PC-3 (cell line): ENCODE measurements at regions of chr14 and their contacts with region 1.

Region 1: GRCh38 chr14:34982417-34983147 is at the start of gene SRP54:
- DNase-seq: peak; percentile 97
- ATAC-seq: peak; percentile 75
- H3K4me3 ChIP-seq: peak within 1 kb of the TSS; percentile 78
- H3K27ac ChIP-seq: peak within 1 kb of the TSS; percentile 93
- H3K4me1 ChIP-seq: peaks cover 19% of the 10 kb centered on the region
- H3K27me3 ChIP-seq: no peaks in the 10 kb centered on the region
- CTCF ChIP-seq: 0 out of 2 replicates have a peak, but pooled peaks have one; percentile 6
- total RNA-seq, gene SRP54: 49.3 and 75.5 TPM in 2 replicates

Region 2: GRCh38 chr14:34678306-34678705 is 304.3 kb before region 1 on chr14:
- CTCF ChIA-PET with region 1: no interaction called
- POLR2A ChIA-PET with region 1: no interaction called
- intact Hi-C with region 1: loop called (anchors 5 kb)
- DNase-seq: no peak
- ATAC-seq: peak; percentile 16
- H3K4me3 ChIP-seq: no peak overlapping the region
- H3K27ac ChIP-seq: peak overlapping the region; percentile 58
- H3K4me1 ChIP-seq: peaks cover 21% of the 10 kb centered on the region
- H3K27me3 ChIP-seq: no peaks in the 10 kb centered on the region
- CTCF ChIP-seq: no peak

Region 3: GRCh38 chr14:34833549-34834523 is 148.7 kb before region 1 on chr14:
- CTCF ChIA-PET with region 1: no interaction called
- POLR2A ChIA-PET with region 1: interaction called, 11 read pairs
- intact Hi-C with region 1: no loop called
- DNase-seq: no peak
- ATAC-seq: no peak
- H3K4me3 ChIP-seq: no peak overlapping the region
- H3K27ac ChIP-seq: no peak overlapping the region
- H3K4me1 ChIP-seq: peaks cover 13% of the 10 kb centered on the region
- H3K27me3 ChIP-seq: no peaks in the 10 kb centered on the region
- CTCF ChIP-seq: no peak

Region 4: DNA sequence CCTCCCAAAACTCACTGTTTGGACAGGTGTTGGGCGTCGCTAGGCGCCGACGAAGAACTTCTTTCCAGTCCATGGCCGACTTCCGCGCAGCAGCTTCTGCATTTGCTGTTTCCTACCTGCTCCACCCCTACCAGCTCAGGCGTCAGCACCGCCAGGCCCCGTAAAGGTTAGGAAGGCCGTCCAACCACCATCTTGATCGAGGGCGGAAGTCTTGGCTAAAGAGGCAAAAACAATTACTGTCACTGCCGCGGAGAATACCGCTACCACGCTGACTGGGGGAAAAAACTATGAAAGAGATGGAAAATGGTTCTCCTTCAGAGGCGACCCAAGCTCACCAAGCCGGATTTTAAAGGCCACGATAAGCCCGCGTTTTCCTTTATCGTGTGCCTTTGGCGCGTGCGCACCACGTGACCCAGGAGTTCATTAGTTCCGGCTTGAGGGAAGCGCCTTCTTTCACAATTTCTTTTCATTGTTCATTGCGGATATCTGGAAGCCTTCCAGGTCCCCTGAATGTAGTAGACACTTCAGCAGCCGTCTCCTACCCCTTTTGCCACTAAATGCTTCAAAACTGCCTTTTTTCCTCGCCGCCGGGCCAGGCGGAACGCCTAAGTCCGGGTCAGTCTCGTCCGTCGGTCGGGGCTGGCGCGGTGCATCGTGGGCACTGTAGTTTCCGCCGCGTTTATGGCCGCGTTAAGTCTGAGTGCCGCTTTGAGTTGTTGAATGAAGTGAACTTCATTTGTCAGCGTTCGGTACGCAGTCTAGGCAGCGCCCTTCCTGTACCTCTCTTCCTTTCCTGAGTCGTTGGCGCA is 139.5 kb after region 1 on chr14 and contains the starts of genes PPP2R3C and PRORP:
- CTCF ChIA-PET with region 1: interaction called, 3 read pairs
- POLR2A ChIA-PET with region 1: interaction called, 5 read pairs
- intact Hi-C with region 1: loop called (anchors 2 kb)
- DNase-seq: peak; percentile 98
- ATAC-seq: peak; percentile 85
- H3K4me3 ChIP-seq: peak within 1 kb of the TSS; percentile 83
- H3K27ac ChIP-seq: peak within 1 kb of the TSS; percentile 92
- H3K4me1 ChIP-seq: peaks cover 13% of the 10 kb centered on the region
- H3K27me3 ChIP-seq: no peaks in the 10 kb centered on the region
- CTCF ChIP-seq: no peak
- total RNA-seq, gene PPP2R3C: 15.2 and 20.3 TPM in 2 replicates
- total RNA-seq, gene PRORP: 25.1 and 25.3 TPM in 2 replicates

Region 5: GRCh38 chr14:35159742-35160409 is 177.3 kb after region 1 on chr14:
- CTCF ChIA-PET with region 1: no interaction called
- POLR2A ChIA-PET with region 1: no interaction called
- intact Hi-C with region 1: no loop called
- DNase-seq: peak; percentile 97
- ATAC-seq: peak; percentile 99
- H3K4me3 ChIP-seq: peak overlapping the region; percentile 49
- H3K27ac ChIP-seq: peak overlapping the region; percentile 95
- H3K4me1 ChIP-seq: peaks cover 42% of the 10 kb centered on the region
- H3K27me3 ChIP-seq: no peaks in the 10 kb centered on the region
- CTCF ChIP-seq: no peak